ENCODE measurements at regions of chr4 and their contacts with region 1.

Region 1: GRCh38 chr4:62644372-62644771 is 1444.2 kb downstream of the ADGRL3 start:
- DNase-seq: peak; percentile 33
- H3K4me3 ChIP-seq: no peak overlapping the region
- H3K27ac ChIP-seq: no peak overlapping the region
- H3K4me1 ChIP-seq: no peaks in the 10 kb centered on the region
- H3K27me3 ChIP-seq: no peaks in the 10 kb centered on the region
- CTCF ChIP-seq: peak; percentile 31 to 54

Region 2: GRCh38 chr4:61540944-61541343 is 1103.4 kb before region 1 on chr4:
- CTCF ChIA-PET with region 1: no interaction called
- dilution Hi-C with region 1: no loop called
- in situ Hi-C with region 1: no loop called
- intact Hi-C with region 1: loop called (anchors 2 kb)
- DNase-seq: no peak
- H3K4me3 ChIP-seq: no peak overlapping the region
- H3K27ac ChIP-seq: no peak overlapping the region
- H3K4me1 ChIP-seq: no peaks in the 10 kb centered on the region
- H3K27me3 ChIP-seq: no peaks in the 10 kb centered on the region
- CTCF ChIP-seq: no peak

Region 3: GRCh38 chr4:62243895-62244294 is 400.5 kb before region 1 on chr4:
- CTCF ChIA-PET with region 1: no interaction called
- dilution Hi-C with region 1: no loop called
- in situ Hi-C with region 1: no loop called
- intact Hi-C with region 1: loop called (anchors 10 kb)
- DNase-seq: no peak
- H3K4me3 ChIP-seq: no peak overlapping the region
- H3K27ac ChIP-seq: no peak overlapping the region
- H3K4me1 ChIP-seq: no peaks in the 10 kb centered on the region
- H3K27me3 ChIP-seq: no peaks in the 10 kb centered on the region
- CTCF ChIP-seq: no peak

Region 4: DNA sequence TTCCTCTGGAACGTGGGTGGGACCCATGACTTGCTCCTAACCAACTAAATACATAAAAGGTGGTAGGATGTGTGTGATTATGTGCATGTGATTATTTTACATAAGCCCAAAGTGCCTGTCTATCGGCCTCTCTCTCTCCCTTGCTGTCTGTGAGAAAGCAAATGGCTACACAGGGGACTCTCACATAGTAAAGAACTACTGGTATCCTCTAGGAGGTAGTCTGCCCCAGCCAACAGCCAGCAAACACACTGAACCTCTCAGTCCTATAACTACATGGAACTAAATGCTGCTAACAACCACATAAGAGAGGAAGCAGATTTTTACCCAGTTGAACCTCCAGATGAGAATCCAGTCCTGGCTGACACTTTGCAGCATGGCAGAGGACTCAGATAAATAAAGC is 194.8 kb before region 1 on chr4:
- CTCF ChIA-PET with region 1: no interaction called
- dilution Hi-C with region 1: no loop called
- in situ Hi-C with region 1: no loop called
- intact Hi-C with region 1: loop called (anchors 5 kb)
- DNase-seq: no peak
- H3K4me3 ChIP-seq: no peak overlapping the region
- H3K27ac ChIP-seq: no peak overlapping the region
- H3K4me1 ChIP-seq: no peaks in the 10 kb centered on the region
- H3K27me3 ChIP-seq: no peaks in the 10 kb centered on the region
- CTCF ChIP-seq: no peak

Measured in mammary epithelial cell (primary cell).